Activated CD4-positive, alpha-beta T cell treated with anti-CD3 and anti-CD28 coated beads, Interleukin-2, amount 10 ng/mL, durations not matched to agents 24 days and 14 days (primary cell): ENCODE measurements at regions of chr6 and their contacts with region 1.

Region 1: GRCh38 chr6:158869826-158870648 is 50.9 kb upstream of the EZR start:
- DNase-seq: peak; percentile 96
- H3K4me3 Mint-ChIP-seq: peak overlapping the region; percentile 86
- H3K27ac Mint-ChIP-seq: peak overlapping the region; percentile 98
- H3K4me1 Mint-ChIP-seq: peaks cover 29% of the 10 kb centered on the region
- H3K27me3 Mint-ChIP-seq: peaks cover 4% of the 10 kb centered on the region

Region 2: DNA sequence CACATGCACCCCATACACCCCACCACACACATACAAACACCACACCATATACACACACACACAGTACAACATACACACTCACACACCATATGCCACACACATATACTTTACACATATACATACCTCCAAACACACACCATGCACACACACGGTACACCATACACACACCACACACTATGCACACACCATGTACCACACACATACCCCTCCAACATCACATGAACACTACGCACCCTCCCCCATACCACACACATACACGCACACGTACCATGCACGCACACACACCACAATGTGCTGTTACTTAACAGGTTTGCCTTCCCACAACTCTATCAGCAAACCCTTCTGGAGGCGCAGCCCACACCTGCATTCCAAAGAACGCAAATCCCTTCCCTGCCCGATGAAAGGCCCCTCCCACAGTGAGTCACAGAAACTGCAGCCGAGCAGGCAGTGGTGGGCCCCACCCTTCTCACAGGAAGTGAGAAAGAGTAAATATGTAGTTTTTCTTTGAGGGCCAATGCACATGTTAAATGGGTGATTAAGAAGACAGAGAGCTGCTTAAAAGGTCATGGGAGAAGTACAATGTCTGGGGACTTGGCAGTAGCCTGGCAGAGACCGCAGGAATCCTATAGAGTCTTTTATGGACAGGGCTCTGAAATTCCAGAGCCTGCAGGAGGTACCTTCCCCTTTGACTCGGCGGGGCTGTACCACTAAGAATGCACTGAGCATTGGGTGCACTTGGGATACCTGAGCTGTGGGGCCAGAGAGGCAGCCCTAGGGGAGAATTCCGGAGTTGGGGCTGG is 16.8 kb before region 1 on chr6:
- intact Hi-C with region 1: loop called (anchors 1 kb)
- DNase-seq: peak; percentile 96
- H3K4me3 Mint-ChIP-seq: no peak overlapping the region
- H3K27ac Mint-ChIP-seq: no peak overlapping the region
- H3K4me1 Mint-ChIP-seq: peaks cover 32% of the 10 kb centered on the region
- H3K27me3 Mint-ChIP-seq: no peaks in the 10 kb centered on the region

Region 3: DNA sequence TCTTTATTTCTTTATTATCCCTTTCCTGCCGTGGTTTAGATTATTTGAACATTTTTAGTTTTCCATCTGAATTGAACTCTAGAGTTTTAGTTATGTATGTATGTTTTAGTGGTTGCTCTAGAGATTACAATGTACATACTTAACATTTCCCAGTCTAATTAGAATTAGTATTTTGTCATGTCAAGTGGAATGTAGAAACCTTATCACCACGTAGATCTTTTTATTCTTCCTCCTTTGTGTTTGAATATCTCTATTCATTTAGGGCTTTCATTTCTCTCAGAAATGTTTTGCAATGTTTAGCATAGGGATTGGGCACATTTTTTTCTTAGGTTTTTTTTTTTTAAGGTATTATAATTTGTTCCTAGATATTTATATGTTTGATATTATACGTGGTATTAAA is 22.2 kb after region 1 on chr6:
- intact Hi-C with region 1: no loop called
- DNase-seq: no peak
- H3K4me3 Mint-ChIP-seq: no peak overlapping the region
- H3K27ac Mint-ChIP-seq: no peak overlapping the region
- H3K4me1 Mint-ChIP-seq: no peaks in the 10 kb centered on the region
- H3K27me3 Mint-ChIP-seq: peaks cover 4% of the 10 kb centered on the region

Region 4: GRCh38 chr6:158910484-158911348 is 40.7 kb after region 1 on chr6:
- intact Hi-C with region 1: loop called (anchors 5 kb)
- DNase-seq: peak; percentile 65
- H3K4me3 Mint-ChIP-seq: peak overlapping the region; percentile 38
- H3K27ac Mint-ChIP-seq: no peak overlapping the region
- H3K4me1 Mint-ChIP-seq: peaks cover 26% of the 10 kb centered on the region
- H3K27me3 Mint-ChIP-seq: no peaks in the 10 kb centered on the region

Region 5: DNA sequence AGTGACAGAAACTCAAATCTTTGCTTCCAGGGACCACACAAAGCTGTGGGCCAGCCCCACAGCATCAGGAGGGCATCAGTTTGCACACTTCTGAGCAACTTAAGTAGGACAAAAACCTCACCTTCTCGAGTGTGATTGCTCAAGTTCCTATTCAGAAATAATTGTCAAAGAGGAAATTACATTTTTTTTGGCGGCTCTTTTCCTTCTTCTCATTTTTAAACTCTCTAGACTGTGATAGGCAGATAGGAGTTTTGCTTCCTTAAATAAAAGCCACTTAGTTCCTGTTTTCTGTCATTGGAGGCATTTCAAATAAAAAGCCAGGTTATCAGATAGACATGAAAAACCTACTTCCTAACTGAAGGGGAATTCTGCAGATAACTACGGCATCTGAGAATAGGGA is 186.0 kb after region 1 on chr6:
- intact Hi-C with region 1: no loop called
- DNase-seq: no peak
- H3K4me3 Mint-ChIP-seq: peak overlapping the region; percentile 70
- H3K27ac Mint-ChIP-seq: peak overlapping the region; percentile 94
- H3K4me1 Mint-ChIP-seq: peaks cover 61% of the 10 kb centered on the region
- H3K27me3 Mint-ChIP-seq: peaks cover 1% of the 10 kb centered on the region